GM12878 (cell line): ENCODE measurements at regions of chr2 and their contacts with region 1.

Region 1: GRCh38 chr2:219278655-219279516 is at the start of gene DNAJB2:
- DNase-seq: peak; percentile 89
- ATAC-seq: peak; percentile 91
- H3K4me3 ChIP-seq: peak within 1 kb of the TSS; percentile 71
- H3K27ac ChIP-seq: peak within 1 kb of the TSS; percentile 90
- H3K4me1 ChIP-seq: peaks cover 26% of the 10 kb centered on the region
- H3K27me3 ChIP-seq: no peaks in the 10 kb centered on the region
- CTCF ChIP-seq: no peak
- EP300 ChIP-seq: peak; percentile 72 to 83
- POLR2A ChIP-seq: peak; percentile 91
- RAD21 ChIP-seq: no peak
- polyA plus RNA-seq, gene DNAJB2: 0.26 to 0.90 TPM

Region 2: GRCh38 chr2:219125225-219125885 is 153.5 kb before region 1 on chr2:
- CTCF ChIA-PET with region 1: no interaction called
- POLR2A ChIA-PET with region 1: no interaction called
- RAD21 ChIA-PET with region 1: no interaction called
- SMC1A ChIA-PET with region 1: no interaction called
- in situ Hi-C with region 1: no loop called
- intact Hi-C with region 1: no loop called
- DNase-seq: no peak
- ATAC-seq: no peak
- H3K4me3 ChIP-seq: no peak overlapping the region
- H3K27ac ChIP-seq: no peak overlapping the region
- H3K4me1 ChIP-seq: no peaks in the 10 kb centered on the region
- H3K27me3 ChIP-seq: no peaks in the 10 kb centered on the region
- CTCF ChIP-seq: no peak
- EP300 ChIP-seq: no peak
- POLR2A ChIP-seq: no peak
- RAD21 ChIP-seq: no peak

Region 3: GRCh38 chr2:219171231-219171651 is 107.6 kb before region 1 on chr2:
- CTCF ChIA-PET with region 1: interaction called, 32 read pairs
- POLR2A ChIA-PET with region 1: interaction called, 34 read pairs
- RAD21 ChIA-PET with region 1: interaction called, 12 read pairs
- SMC1A ChIA-PET with region 1: interaction called, 11 read pairs
- in situ Hi-C with region 1: no loop called
- intact Hi-C with region 1: loop called (anchors 5 kb)
- DNase-seq: no peak
- ATAC-seq: peak; percentile 61
- H3K4me3 ChIP-seq: no peak overlapping the region
- H3K27ac ChIP-seq: no peak overlapping the region
- H3K4me1 ChIP-seq: no peaks in the 10 kb centered on the region; the same call in 1 of the 2 replicates
- H3K27me3 ChIP-seq: no peaks in the 10 kb centered on the region
- CTCF ChIP-seq: peak; percentile 65 to 77 (median 65)
- EP300 ChIP-seq: no peak
- POLR2A ChIP-seq: 0 out of 2 replicates have a peak, but pooled peaks have one; percentile 33
- RAD21 ChIP-seq: peak; percentile 52

Region 4: GRCh38 chr2:219206442-219207253 is 72.2 kb before region 1 on chr2 and contains the start of gene ZFAND2B:
- CTCF ChIA-PET with region 1: interaction called, 4 read pairs
- POLR2A ChIA-PET with region 1: no interaction called
- RAD21 ChIA-PET with region 1: interaction called, 4 read pairs
- SMC1A ChIA-PET with region 1: interaction called, 3 read pairs
- in situ Hi-C with region 1: no loop called
- intact Hi-C with region 1: loop called (anchors 5 kb)
- DNase-seq: peak; percentile 52
- ATAC-seq: peak; percentile 99
- H3K4me3 ChIP-seq: peak within 1 kb of the TSS; percentile 50
- H3K27ac ChIP-seq: peak within 1 kb of the TSS; percentile 72
- H3K4me1 ChIP-seq: peaks cover 8% of the 10 kb centered on the region
- H3K27me3 ChIP-seq: no peaks in the 10 kb centered on the region
- CTCF ChIP-seq: peak in 2 of 3 experiments; percentile 9 to 14; a peak in 1 of 6 replicates
- EP300 ChIP-seq: no peak
- POLR2A ChIP-seq: peak; percentile 99
- RAD21 ChIP-seq: no peak
- polyA plus RNA-seq, gene ZFAND2B: 5.4 to 10.7 TPM

Region 5: DNA sequence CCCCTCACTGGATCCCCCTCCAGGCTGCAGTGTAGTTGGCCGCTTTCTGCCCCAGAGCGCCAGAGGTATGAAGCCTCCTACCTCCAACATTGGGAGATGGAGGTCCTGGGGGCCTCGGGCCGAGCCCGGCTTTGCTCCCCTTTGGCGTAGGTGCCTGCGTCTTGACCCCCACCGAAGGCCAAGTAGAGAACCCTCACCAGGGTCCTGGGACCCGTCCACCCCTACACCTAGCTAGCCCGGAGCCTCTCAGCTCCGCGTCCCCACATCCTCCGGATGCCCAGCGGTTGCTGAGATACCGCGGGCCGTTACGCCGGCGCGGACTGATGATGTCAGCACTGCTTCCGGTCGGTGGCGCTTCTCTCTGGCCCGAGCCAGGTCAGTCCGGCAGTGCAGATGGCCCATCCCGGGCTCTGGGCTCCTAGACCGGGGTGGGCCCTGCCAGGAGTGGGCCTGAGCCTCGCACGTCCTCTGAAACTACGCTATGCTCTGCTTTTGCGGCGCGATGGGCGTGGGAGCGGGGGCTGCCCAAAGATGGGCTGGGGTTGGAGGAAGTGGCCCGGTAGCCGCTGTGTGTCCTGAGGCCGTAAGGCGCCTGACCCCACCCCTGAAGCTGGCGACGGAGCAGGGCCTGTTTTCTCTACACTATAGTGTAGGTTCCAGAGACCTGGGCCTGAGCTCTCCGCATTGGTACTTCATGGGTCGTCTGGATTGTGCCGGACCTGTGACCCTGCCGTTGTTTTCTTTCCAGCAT is 33.6 kb before region 1 on chr2 and contains the starts of genes GLB1L and STK16:
- CTCF ChIA-PET with region 1: interaction called, 69 read pairs
- POLR2A ChIA-PET with region 1: interaction called, 160 read pairs
- RAD21 ChIA-PET with region 1: interaction called, 46 read pairs
- SMC1A ChIA-PET with region 1: interaction called, 98 read pairs
- in situ Hi-C with region 1: no loop called
- intact Hi-C with region 1: no loop called
- DNase-seq: peak; percentile 75
- ATAC-seq: peak; percentile 83
- H3K4me3 ChIP-seq: peak within 1 kb of the TSS; percentile 90
- H3K27ac ChIP-seq: peak within 1 kb of the TSS; percentile 70
- H3K4me1 ChIP-seq: peaks cover 44% of the 10 kb centered on the region
- H3K27me3 ChIP-seq: no peaks in the 10 kb centered on the region
- CTCF ChIP-seq: no peak
- EP300 ChIP-seq: no peak
- POLR2A ChIP-seq: peak; percentile 96
- RAD21 ChIP-seq: no peak
- polyA plus RNA-seq, gene GLB1L: 0.29 to 1.0 TPM
- polyA plus RNA-seq, gene STK16: 8.4 to 9.0 TPM

Region 6: DNA sequence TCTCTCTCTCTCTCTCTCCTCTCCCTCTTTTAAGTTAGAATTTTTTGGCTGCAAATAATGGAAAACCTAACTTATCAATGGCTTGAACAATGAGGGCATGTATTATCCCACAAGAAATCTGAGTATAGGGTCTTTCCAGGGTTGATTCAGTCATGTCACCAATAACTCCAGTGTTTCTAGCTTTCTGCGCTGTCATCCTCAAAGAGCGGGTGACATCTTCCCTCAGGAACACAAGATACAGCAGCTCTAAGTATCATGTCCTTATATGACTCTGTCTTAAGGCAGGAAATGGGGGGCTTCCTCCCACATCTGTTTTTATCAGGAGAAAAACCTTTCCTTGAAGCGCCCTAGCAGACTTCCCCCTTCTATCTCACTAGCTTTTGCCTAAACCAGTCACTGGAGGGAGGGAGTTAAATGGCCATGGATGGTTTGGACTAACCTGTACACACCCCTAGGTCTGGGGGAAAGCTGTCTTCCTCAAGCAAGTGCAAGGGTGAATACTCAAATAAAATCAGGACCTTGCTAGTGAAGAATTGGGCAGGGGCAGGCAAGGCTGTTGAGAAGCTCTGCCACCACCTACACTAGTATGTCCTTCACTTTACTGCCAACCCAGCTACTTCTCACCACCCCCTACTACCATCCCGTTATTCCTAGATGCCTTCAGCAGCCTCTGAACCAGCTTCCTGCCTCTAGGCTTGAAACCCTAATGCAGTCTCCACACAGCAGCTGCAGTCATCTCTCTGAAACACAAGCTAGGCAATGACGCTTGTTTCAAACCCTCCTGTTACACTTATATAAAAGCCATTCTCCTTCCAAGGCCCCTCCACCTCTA is 17.6 kb before region 1 on chr2:
- CTCF ChIA-PET with region 1: interaction called, 65 read pairs
- POLR2A ChIA-PET with region 1: interaction called, 8 read pairs
- RAD21 ChIA-PET with region 1: interaction called, 4 read pairs
- SMC1A ChIA-PET with region 1: interaction called, 98 read pairs
- in situ Hi-C with region 1: no loop called
- intact Hi-C with region 1: no loop called
- DNase-seq: no peak
- ATAC-seq: 0 out of 3 replicates have a peak, but pooled peaks have one; percentile 23
- H3K4me3 ChIP-seq: no peak overlapping the region
- H3K27ac ChIP-seq: no peak overlapping the region
- H3K4me1 ChIP-seq: no peaks in the 10 kb centered on the region
- H3K27me3 ChIP-seq: peaks cover 0 to 4% of the 10 kb centered on the region in 2 experiments; a peak in 1 of 4 replicates
- CTCF ChIP-seq: no peak
- EP300 ChIP-seq: no peak
- POLR2A ChIP-seq: no peak
- RAD21 ChIP-seq: no peak

Region 7: DNA sequence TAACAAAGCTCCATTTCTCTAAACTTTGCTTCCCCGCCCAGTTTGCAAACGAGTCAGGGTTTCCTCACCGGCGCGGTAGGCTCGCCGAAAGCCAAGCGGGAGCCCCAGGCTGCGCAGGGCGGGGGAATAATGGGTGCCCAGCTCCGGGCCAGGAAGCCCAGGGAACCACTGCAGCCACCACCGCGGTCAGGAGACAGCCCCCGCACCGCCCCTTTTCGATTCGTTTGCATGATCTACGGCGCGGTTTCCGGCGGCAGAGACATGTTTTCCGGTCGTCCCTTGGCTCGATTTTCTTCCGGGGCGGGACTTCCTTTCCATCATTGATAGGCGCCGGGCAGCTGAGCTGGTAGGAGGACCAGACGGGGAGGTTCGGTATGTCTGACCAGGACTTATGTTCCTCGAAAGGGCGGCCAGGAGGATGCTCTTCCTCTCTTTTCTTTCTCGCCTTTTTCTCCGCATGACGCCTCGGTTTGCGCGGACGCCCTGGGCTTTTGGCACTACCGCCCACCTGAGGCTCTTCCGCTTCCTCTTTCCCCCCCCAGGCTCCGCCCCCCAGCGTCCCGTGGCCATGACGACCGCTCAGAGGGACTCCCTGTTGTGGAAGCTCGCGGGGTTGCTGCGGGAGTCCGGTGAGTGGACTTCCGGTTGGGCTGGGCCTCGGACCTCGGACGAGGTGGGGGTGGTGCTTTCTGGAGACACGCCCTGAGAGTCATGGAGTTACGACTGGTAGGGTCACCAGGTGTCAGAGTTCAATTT is 318.8 kb after region 1 on chr2 and contains the start of gene STK11IP:
- CTCF ChIA-PET with region 1: no interaction called
- POLR2A ChIA-PET with region 1: no interaction called
- RAD21 ChIA-PET with region 1: no interaction called
- SMC1A ChIA-PET with region 1: no interaction called
- in situ Hi-C with region 1: no loop called
- intact Hi-C with region 1: loop called (anchors 5 kb)
- DNase-seq: peak; percentile 84
- ATAC-seq: peak; percentile 96
- H3K4me3 ChIP-seq: peak within 1 kb of the TSS; percentile 74
- H3K27ac ChIP-seq: peak within 1 kb of the TSS; percentile 81
- H3K4me1 ChIP-seq: 0 out of 2 replicates have a peak, but pooled peaks cover 8% of the 10 kb centered on the region
- H3K27me3 ChIP-seq: no peaks in the 10 kb centered on the region
- CTCF ChIP-seq: no peak
- EP300 ChIP-seq: no peak
- POLR2A ChIP-seq: peak; percentile 97
- RAD21 ChIP-seq: no peak
- polyA plus RNA-seq, gene STK11IP: 0.42 to 1.6 TPM